Activated naive CD4-positive, alpha-beta T cell treated with anti-CD3 and anti-CD28 coated beads, Interleukin-2, amount 10 ng/mL, durations not matched to agents 7 days and 5 days (primary cell): ENCODE measurements at regions of chr16 and their contacts with region 1.

Region 1: GRCh38 chr16:30628627-30629540 is 18.7 kb upstream of the ZNF689 start:
- DNase-seq: peak; percentile 92
- H3K4me3 Mint-ChIP-seq: no peak overlapping the region
- H3K27ac Mint-ChIP-seq: no peak overlapping the region
- H3K4me1 Mint-ChIP-seq: peaks cover 14% of the 10 kb centered on the region
- H3K27me3 Mint-ChIP-seq: peaks cover 17% of the 10 kb centered on the region

Region 2: GRCh38 chr16:30509081-30509765 is 119.7 kb before region 1 on chr16:
- CTCF ChIA-PET with region 1: no interaction called
- DNase-seq: no peak
- H3K4me3 Mint-ChIP-seq: no peak overlapping the region
- H3K27ac Mint-ChIP-seq: peak overlapping the region; percentile 24
- H3K4me1 Mint-ChIP-seq: peaks cover 7% of the 10 kb centered on the region
- H3K27me3 Mint-ChIP-seq: no peaks in the 10 kb centered on the region

Region 3: GRCh38 chr16:30615358-30616091 is 13.4 kb before region 1 on chr16:
- CTCF ChIA-PET with region 1: interaction called, 34 read pairs
- DNase-seq: peak; percentile 87
- H3K4me3 Mint-ChIP-seq: no peak overlapping the region
- H3K27ac Mint-ChIP-seq: no peak overlapping the region
- H3K4me1 Mint-ChIP-seq: peaks cover 15% of the 10 kb centered on the region
- H3K27me3 Mint-ChIP-seq: peaks cover 12% of the 10 kb centered on the region

Region 4: DNA sequence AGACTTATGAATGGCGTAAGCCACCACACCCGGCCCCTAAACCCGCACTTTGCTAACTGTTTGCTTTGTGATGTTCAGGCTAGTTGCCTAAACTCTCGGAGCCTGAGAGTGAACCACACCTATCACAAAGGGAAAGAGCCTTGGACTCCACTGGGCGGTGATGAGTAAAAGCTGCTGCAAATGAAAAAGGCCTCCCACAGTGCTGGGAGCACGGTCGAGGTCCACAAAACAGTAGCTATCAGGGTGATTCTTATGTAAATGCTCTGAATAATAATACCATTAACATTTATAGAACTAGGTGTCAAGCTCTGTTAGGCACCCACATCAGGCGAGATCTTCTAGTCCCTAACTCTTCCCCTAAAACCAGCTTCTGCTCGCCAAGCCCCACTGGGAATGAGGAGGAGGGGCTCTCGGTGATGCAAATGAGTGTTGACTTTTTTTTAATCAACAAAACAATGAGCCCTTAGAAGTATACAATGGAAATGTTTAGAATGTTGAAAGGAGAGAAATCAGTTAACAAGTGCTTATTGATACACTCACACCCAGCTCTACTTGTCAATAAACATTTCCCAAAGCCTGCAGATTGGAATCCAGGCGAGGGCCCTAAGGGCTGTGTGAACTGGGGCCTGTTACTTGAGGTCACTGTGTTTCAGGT is 49.2 kb after region 1 on chr16:
- CTCF ChIA-PET with region 1: no interaction called
- DNase-seq: no peak
- H3K4me3 Mint-ChIP-seq: no peak overlapping the region
- H3K27ac Mint-ChIP-seq: no peak overlapping the region
- H3K4me1 Mint-ChIP-seq: no peaks in the 10 kb centered on the region
- H3K27me3 Mint-ChIP-seq: peaks cover 18% of the 10 kb centered on the region